Heart left ventricle (tissue), 16 donors: ENCODE measurements at regions of chr10 and their contacts with region 1.

Region 1: GRCh38 chr10:31031558-31032257 is at the start of gene ZNF438:
- DNase-seq: peak; percentile 96 to 98 (median 96)
- ATAC-seq: peak; percentile 89 to 98 (median 94)
- H3K4me3 ChIP-seq: peak within 1 kb of the TSS; percentile 44 to 81 (median 70)
- H3K27ac ChIP-seq: peak within 1 kb of the TSS; percentile 97 to 100 (median 99)
- H3K4me1 ChIP-seq: peaks cover 0 to 58% (median 29%) of the 10 kb centered on the region in 12 donors
- H3K27me3 ChIP-seq: no peaks in the 10 kb centered on the region
- CTCF ChIP-seq: peak; percentile 39 to 85 (median 68)
- POLR2A ChIP-seq: peak in 1 of 2 donors; percentile 79
- total RNA-seq, gene ZNF438: 11.1 to 14.7 (median 13.2) TPM

Region 2: GRCh38 chr10:30857803-30858202 is 173.9 kb before region 1 on chr10:
- intact Hi-C with region 1: loop called in 2 of 10 experiments (anchors 2 to 5 kb)
- DNase-seq: peak; percentile 71 to 87 (median 76)
- ATAC-seq: peak; percentile 81 to 96 (median 90)
- H3K4me3 ChIP-seq: no peak overlapping the region
- H3K27ac ChIP-seq: peak overlapping the region; percentile 23 to 78 (median 65)
- H3K4me1 ChIP-seq: peaks cover 0 to 63% (median 29%) of the 10 kb centered on the region in 12 donors
- H3K27me3 ChIP-seq: no peaks in the 10 kb centered on the region
- CTCF ChIP-seq: no peak
- POLR2A ChIP-seq: no peak

Region 3: GRCh38 chr10:30991647-30992011 is 40.1 kb before region 1 on chr10:
- intact Hi-C with region 1: loop called in 1 of 10 experiments (anchors 5 kb)
- DNase-seq: no peak
- ATAC-seq: peak in 2 of 4 donors; percentile 9 to 25
- H3K4me3 ChIP-seq: no peak overlapping the region
- H3K27ac ChIP-seq: peak overlapping the region in 7 of 12 donors; percentile 19 to 44 (median 34)
- H3K4me1 ChIP-seq: peaks cover 2 to 65% (median 34%) of the 10 kb centered on the region in 12 donors
- H3K27me3 ChIP-seq: no peaks in the 10 kb centered on the region
- CTCF ChIP-seq: no peak
- POLR2A ChIP-seq: no peak

Region 4: DNA sequence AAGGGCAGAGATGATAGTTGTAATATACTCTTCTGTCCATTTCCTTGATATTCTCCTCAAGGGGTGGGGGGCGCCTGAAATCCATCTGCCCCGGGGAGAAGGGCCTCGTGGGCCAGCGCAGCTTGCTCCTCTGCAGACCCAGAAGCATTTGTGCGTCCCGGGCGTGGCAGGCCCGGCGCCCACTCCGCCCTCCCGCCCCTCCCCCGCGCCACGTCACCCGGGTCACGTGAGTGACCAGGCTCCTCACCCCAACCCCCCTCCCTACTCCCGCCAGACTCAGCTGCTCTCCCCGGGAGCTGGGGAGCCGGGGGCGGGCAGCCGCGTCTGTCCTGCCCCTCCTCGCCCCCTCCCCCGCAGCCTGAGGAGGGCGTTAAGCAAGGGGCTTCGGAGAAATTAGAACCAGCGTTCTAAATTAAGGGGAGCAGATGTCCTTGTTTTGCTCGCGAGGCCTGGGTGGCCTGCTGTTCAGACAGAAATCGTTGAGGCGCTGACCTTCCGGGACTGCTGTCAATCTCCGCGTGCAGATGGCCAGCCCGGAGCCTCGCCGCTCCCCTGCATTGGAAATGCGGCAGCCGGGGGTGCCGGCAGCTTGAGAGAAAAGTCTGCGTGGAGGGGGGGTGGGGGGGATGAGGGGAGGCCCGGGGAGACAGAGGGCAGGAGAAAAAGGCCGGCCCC is 102.1 kb after region 1 on chr10:
- intact Hi-C with region 1: loop called in 5 of 10 experiments (anchors 5 to 10 kb)
- DNase-seq: peak; percentile 88 to 92 (median 90)
- ATAC-seq: peak; percentile 88 to 94 (median 92)
- H3K4me3 ChIP-seq: peak overlapping the region; percentile 1 to 66 (median 50)
- H3K27ac ChIP-seq: peak overlapping the region; percentile 52 to 95 (median 88)
- H3K4me1 ChIP-seq: peaks cover 0 to 56% (median 18%) of the 10 kb centered on the region in 12 donors
- H3K27me3 ChIP-seq: no peaks in the 10 kb centered on the region
- CTCF ChIP-seq: no peak
- POLR2A ChIP-seq: peak in 1 of 2 donors; percentile 51

Region 5: DNA sequence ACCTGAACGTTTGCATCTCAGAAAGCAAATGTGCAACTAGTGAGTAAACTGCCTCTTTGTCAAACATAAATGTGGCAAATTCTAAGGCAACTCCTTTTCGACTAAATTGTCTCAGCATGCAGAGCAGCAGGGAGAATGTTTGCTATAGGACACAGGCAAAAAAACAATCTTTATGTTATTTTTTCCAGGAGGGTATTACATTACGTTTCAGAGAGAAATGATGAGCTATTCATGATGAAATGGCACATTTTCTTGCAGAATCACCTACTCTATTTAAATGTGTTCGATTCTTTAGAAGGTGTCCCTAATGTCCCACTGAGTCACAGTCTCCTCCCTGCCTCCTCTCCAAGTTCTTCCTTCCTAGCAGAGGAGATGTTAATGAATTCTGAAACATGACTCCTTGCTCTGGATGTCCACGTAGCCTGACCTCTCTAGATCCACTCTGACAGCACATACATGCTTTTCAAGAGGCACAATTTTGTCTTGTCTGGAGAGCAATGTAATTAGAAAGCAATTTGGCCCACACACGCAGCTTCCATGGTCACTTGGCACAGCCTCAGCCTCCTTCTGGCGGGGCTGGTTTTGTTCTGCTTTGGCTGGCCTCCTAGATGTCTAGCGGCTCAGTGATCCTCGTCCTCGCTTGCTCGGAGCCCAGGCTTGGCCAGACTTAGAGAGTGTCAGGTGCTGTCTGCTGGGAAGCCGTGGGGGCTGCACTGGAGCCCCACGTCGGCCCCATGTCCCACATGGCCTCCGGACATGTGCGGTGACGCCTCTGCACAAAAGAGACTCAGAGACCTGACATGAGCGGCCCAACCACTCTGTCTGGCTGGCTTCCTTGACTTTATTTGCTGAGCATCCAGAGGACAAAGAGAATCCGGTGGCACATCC is 125.7 kb after region 1 on chr10:
- intact Hi-C with region 1: loop called in 2 of 10 experiments (anchors 2 to 5 kb)
- DNase-seq: peak; percentile 82 to 87 (median 86)
- ATAC-seq: peak; percentile 77 to 93 (median 90)
- H3K4me3 ChIP-seq: peak overlapping the region in 3 of 12 donors; percentile 0 to 12 (median 6)
- H3K27ac ChIP-seq: peak overlapping the region; percentile 12 to 83 (median 76)
- H3K4me1 ChIP-seq: peaks cover 3 to 36% (median 29%) of the 10 kb centered on the region in 12 donors
- H3K27me3 ChIP-seq: no peaks in the 10 kb centered on the region
- CTCF ChIP-seq: no peak
- POLR2A ChIP-seq: no peak

Region 6: DNA sequence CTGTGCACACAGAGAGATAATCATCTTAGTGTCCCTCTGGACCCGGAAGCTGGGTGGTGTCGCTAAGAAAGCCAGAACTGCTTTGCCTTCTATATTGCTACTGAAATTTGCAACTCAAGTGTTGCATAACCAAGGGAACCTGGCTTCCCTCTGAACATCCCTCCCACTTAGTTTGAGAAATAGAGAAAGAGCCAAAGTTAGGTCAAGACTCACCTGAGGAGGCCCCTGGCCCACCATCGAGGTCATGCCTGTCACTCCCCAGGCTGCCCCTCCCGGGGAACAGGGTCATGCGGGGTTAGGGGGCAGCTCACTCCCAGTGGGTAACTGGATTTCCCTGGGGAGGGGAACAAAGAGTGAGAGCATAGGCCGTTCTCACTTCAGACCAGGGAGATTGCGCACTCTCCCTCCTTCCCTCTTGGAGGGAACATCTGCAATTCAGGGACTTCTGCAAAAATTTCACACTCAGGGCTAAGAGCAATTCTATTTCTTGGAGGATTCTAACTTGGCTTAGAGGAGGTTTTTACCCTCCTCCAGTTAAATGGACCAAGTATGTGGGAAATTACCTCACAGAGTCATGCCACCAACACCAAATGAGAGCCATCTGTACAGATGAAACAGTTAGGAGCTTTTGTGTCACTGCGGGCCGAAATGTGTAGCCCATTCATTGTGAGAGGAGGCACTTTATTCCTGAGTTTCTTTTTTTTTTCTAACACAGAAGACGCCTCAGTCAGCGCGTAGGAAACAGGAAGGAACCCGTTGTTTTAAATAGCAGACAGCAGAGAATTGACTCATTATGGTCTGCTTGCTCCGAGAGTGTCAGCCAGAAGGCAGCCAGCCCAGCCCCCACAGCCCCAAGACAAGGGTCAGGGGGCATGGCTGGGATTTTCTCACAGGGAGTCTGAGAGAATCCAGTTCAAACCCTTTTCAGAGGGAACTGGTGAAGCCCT is 675.7 kb after region 1 on chr10:
- intact Hi-C with region 1: loop called in 2 of 10 experiments (anchors 5 to 10 kb)
- DNase-seq: peak; percentile 84 to 86 (median 84)
- ATAC-seq: peak; percentile 72 to 92 (median 90)
- H3K4me3 ChIP-seq: peak overlapping the region in 9 of 12 donors; percentile 7 to 41 (median 31)
- H3K27ac ChIP-seq: peak overlapping the region; percentile 74 to 97 (median 87)
- H3K4me1 ChIP-seq: peaks cover 0 to 64% (median 41%) of the 10 kb centered on the region in 12 donors
- H3K27me3 ChIP-seq: no peaks in the 10 kb centered on the region
- CTCF ChIP-seq: no peak
- POLR2A ChIP-seq: no peak

Region 7: DNA sequence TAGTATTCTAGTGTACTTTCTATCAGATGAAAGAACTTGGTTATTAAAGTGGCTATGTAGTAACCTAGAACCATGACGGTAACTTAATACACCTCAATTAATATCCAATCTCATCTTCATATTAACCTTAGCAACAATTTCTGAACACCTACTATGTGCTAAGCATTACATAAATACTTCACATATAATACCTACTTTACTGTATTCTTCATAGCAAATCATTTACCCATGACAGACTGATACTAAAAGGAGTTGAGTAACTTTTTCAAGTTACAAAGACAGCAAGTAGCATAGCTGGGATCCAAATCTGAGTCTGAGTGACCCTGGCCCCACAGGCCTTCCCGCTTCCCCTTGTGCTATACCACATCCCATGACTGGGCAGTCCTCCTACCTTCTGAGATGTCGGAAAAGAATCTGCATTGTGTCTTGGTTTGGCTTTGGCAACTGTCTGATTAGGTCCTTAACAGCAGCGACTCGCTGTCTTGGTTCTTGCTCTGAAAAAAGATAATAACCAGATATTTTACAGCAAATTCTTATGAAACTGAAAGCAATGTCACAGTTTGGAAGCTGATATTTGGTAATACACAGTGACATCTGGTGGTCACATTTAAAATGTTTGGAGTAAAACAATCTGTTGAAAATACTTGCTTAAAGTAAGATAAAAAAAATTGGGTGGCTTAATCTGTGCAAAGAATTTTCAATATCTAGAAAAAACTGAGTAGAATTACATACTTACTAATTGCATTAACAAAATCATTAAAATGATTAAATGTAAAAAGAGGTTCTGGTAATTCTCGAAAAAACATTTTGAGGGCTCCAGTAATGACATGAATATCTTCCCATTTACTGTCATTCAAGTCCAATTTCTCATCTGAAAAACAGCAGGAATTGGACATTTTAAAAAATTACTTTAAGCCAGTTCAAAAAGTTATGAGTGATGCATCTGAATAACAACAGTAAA is 776.8 kb after region 1 on chr10:
- intact Hi-C with region 1: loop called in 2 of 10 experiments (anchors 5 kb)
- DNase-seq: peak; percentile 28 to 51 (median 35)
- ATAC-seq: peak; percentile 51 to 86 (median 80)
- H3K4me3 ChIP-seq: peak overlapping the region in 11 of 12 donors; percentile 18 to 60 (median 47)
- H3K27ac ChIP-seq: peak overlapping the region; percentile 13 to 86 (median 80)
- H3K4me1 ChIP-seq: peaks cover 0 to 12% (median 0%) of the 10 kb centered on the region in 12 donors
- H3K27me3 ChIP-seq: no peaks in the 10 kb centered on the region
- CTCF ChIP-seq: peak; percentile 37 to 79 (median 62)
- POLR2A ChIP-seq: no peak